ENCODE measurements at regions of chr6 and their contacts with region 1.

Region 1: GRCh38 chr6:13526727-13527670 is 39.6 kb upstream of the GFOD1 start:
- DNase-seq: peak; percentile 41
- ATAC-seq: peak; percentile 90
- H3K4me3 Mint-ChIP-seq: peak overlapping the region; percentile 3
- H3K27ac Mint-ChIP-seq: peak overlapping the region; percentile 78
- H3K4me1 Mint-ChIP-seq: peaks cover 47% of the 10 kb centered on the region
- H3K27me3 Mint-ChIP-seq: no peaks in the 10 kb centered on the region
- CTCF ChIP-seq: no peak

Region 2: DNA sequence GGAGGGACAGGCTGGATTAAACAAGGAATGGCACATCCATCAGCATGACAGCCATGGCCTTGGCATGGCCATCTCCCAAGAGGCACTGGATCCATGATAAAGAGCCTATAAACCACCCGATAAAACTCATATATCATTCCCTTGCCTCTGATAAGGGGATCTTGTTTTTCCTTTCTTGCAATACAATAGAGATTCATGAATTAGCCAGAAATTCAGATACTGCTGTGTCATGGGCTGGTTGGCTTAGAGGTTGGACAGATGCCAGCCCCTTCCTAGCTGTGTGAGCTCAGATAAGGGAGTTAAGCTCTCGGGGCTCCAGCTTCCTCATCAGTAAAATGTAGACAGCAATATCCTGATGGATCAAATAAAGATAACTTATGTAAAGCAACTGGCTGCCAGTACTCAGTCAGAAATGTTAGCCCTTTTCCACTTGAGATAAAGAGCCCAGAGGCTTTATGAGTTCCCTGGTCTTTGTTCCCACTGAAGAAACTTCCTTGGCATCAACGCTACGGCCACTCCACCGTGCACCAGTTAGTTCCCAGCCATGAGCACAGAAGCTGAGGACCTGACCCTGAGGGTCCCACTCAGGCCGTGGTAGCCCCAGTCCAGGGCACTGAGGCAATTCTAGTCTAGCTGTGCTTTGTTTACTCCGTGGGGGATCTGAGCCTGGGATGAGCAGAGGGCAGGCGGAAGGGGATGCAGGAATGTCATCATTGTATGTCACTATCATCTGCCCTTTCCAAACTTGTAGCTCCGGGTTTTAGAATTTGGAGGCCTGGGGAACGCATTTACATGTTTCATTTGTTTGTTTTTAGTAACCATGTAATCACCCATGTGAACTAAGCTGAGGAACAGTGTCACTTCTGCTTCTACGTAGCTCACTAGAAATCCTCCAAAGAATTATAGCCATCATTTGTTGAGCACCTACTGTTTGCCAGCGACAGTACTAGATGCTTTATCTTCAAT is 131.4 kb before region 1 on chr6:
- CTCF ChIA-PET with region 1: no interaction called
- POLR2A ChIA-PET with region 1: interaction called, 4 read pairs
- intact Hi-C with region 1: loop called (anchors 5 kb)
- DNase-seq: no peak
- ATAC-seq: peak; percentile 62
- H3K4me3 Mint-ChIP-seq: peak overlapping the region; percentile 47
- H3K27ac Mint-ChIP-seq: peak overlapping the region; percentile 91
- H3K4me1 Mint-ChIP-seq: peaks cover 56% of the 10 kb centered on the region
- H3K27me3 Mint-ChIP-seq: no peaks in the 10 kb centered on the region
- CTCF ChIP-seq: no peak

Region 3: GRCh38 chr6:13427801-13428582 is 99.0 kb before region 1 on chr6:
- CTCF ChIA-PET with region 1: no interaction called
- POLR2A ChIA-PET with region 1: interaction called, 10 read pairs
- intact Hi-C with region 1: loop called (anchors 1 kb)
- DNase-seq: peak; percentile 58
- ATAC-seq: peak; percentile 86
- H3K4me3 Mint-ChIP-seq: peak overlapping the region; percentile 80
- H3K27ac Mint-ChIP-seq: peak overlapping the region; percentile 95
- H3K4me1 Mint-ChIP-seq: peaks cover 68% of the 10 kb centered on the region
- H3K27me3 Mint-ChIP-seq: no peaks in the 10 kb centered on the region
- CTCF ChIP-seq: no peak

Region 4: GRCh38 chr6:13454286-13455221 is 72.4 kb before region 1 on chr6:
- CTCF ChIA-PET with region 1: no interaction called
- POLR2A ChIA-PET with region 1: interaction called, 4 read pairs
- intact Hi-C with region 1: loop called (anchors 2 kb)
- DNase-seq: peak; percentile 37
- ATAC-seq: peak; percentile 81
- H3K4me3 Mint-ChIP-seq: peak overlapping the region; percentile 65
- H3K27ac Mint-ChIP-seq: peak overlapping the region; percentile 85
- H3K4me1 Mint-ChIP-seq: peaks cover 60% of the 10 kb centered on the region
- H3K27me3 Mint-ChIP-seq: no peaks in the 10 kb centered on the region
- CTCF ChIP-seq: no peak

Region 5: GRCh38 chr6:13538084-13538483 is 11.1 kb after region 1 on chr6:
- CTCF ChIA-PET with region 1: interaction called, 12 read pairs
- POLR2A ChIA-PET with region 1: interaction called, 8 read pairs
- intact Hi-C with region 1: no loop called
- DNase-seq: no peak
- ATAC-seq: peak; percentile 58
- H3K4me3 Mint-ChIP-seq: no peak overlapping the region
- H3K27ac Mint-ChIP-seq: no peak overlapping the region
- H3K4me1 Mint-ChIP-seq: peaks cover 14% of the 10 kb centered on the region
- H3K27me3 Mint-ChIP-seq: no peaks in the 10 kb centered on the region
- CTCF ChIP-seq: no peak

Region 6: DNA sequence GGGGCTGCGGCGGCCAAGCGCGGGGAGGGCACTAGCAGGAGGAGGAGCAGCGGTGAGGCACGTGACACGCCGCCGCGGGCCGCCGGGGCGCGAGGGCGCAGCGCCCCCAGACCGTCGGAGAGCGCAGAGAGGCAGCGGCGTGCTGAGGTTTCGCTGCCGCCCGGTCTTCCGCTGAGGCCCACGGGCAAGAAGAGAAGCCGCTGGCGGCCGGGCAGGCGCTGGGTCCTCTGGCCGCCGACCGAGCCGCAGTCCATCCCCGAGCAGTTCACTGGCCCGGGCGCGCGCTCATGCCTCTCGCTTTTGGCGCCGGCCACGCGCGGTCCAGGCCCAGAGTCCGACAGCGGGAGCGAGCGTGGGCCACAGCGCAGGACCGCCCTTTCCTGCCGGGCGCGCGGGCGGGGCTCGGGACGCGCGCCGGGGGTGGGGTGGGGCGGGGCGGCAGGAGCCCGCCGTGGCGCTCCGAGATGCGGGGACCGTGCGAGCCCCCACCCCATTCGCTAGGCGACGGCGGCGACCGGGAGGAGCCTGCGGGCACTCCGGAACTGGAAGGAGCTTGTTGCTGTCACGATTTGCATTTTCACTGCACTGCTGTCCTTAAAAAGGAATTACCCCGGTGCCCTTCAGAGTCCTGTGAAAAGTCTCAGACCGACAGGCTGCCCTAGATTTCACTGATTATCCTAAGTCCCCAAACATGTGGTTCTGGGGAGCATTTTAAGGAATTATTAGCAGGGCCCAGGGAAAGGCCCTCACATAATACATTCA is 287.4 kb after region 1 on chr6 and contains the start of gene MCUR1:
- CTCF ChIA-PET with region 1: no interaction called
- POLR2A ChIA-PET with region 1: interaction called, 3 read pairs
- intact Hi-C with region 1: loop called (anchors 1 kb)
- DNase-seq: peak; percentile 81
- ATAC-seq: peak; percentile 83
- H3K4me3 Mint-ChIP-seq: peak within 1 kb of the TSS; percentile 91
- H3K27ac Mint-ChIP-seq: peak within 1 kb of the TSS; percentile 87
- H3K4me1 Mint-ChIP-seq: peaks cover 32% of the 10 kb centered on the region
- H3K27me3 Mint-ChIP-seq: no peaks in the 10 kb centered on the region
- CTCF ChIP-seq: no peak
- total RNA-seq, gene MCUR1: 13.6 and 14.1 TPM in 2 replicates